K562 (cell line): ENCODE measurements at regions of chr6 and their contacts with region 1.

Region 1: GRCh38 chr6:81752138-81752920 is at the start of gene TENT5A:
- DNase-seq: peak; percentile 81 to 88 (median 84)
- ATAC-seq: peak; percentile 96
- H3K4me3 ChIP-seq: peak within 1 kb of the TSS; percentile 70
- H3K27ac ChIP-seq: peak within 1 kb of the TSS; percentile 81
- H3K4me1 ChIP-seq: peaks cover 3 to 27% of the 10 kb centered on the region in 2 experiments; a peak in 3 of 5 replicates
- H3K27me3 ChIP-seq: peaks cover 0 to 4% of the 10 kb centered on the region in 2 experiments; a peak in 1 of 5 replicates
- CTCF ChIP-seq: no peak
- EP300 ChIP-seq: no peak
- POLR2A ChIP-seq: peak; percentile 72
- RAD21 ChIP-seq: no peak
- polyA plus RNA-seq, gene TENT5A: 1.1 to 1.7 TPM

Region 2: DNA sequence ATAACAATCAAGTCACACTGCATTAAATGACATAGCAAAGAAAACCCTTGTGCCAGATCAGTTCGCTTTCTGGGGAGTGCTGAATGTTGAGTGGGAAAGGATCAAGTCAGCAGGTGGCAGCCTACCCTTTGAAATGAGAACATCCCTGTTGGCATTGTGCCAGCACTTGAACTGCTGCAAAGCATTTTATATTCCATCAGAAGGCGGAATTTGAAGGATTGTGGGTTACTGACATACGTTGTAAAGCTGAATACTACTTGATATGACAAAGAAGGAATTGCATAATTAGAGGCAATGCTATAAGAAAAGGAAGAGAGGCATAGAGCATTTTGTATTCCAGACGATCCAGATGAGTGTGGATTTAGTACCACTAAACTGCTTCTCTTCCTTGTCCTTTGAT is 1619.3 kb before region 1 on chr6:
- CTCF ChIA-PET with region 1: no interaction called
- POLR2A ChIA-PET with region 1: interaction called, 3 read pairs
- in situ Hi-C with region 1: no loop called
- intact Hi-C with region 1: loop called (anchors 2 kb)
- DNase-seq: peak; percentile 27 to 61 (median 46)
- ATAC-seq: peak; percentile 67; the same call in 2 of the 3 replicates
- H3K4me3 ChIP-seq: no peak overlapping the region
- H3K27ac ChIP-seq: no peak overlapping the region
- H3K4me1 ChIP-seq: peaks cover 0 to 4% of the 10 kb centered on the region in 2 experiments; a peak in 1 of 5 replicates
- H3K27me3 ChIP-seq: no peaks in the 10 kb centered on the region
- CTCF ChIP-seq: peak in 2 of 3 experiments; percentile 49 to 57; a peak in 3 of 6 replicates
- EP300 ChIP-seq: no peak
- POLR2A ChIP-seq: no peak
- RAD21 ChIP-seq: peak; percentile 35 to 82; a peak in 3 of 4 replicates

Region 3: GRCh38 chr6:80214436-80215022 is 1537.8 kb before region 1 on chr6:
- CTCF ChIA-PET with region 1: no interaction called
- POLR2A ChIA-PET with region 1: no interaction called
- in situ Hi-C with region 1: no loop called
- intact Hi-C with region 1: loop called (anchors 5 kb)
- DNase-seq: peak; percentile 9 to 65 (median 32)
- ATAC-seq: peak; percentile 98
- H3K4me3 ChIP-seq: no peak overlapping the region
- H3K27ac ChIP-seq: no peak overlapping the region
- H3K4me1 ChIP-seq: no peaks in the 10 kb centered on the region
- H3K27me3 ChIP-seq: no peaks in the 10 kb centered on the region
- CTCF ChIP-seq: peak; percentile 64 to 84 (median 76)
- EP300 ChIP-seq: no peak
- POLR2A ChIP-seq: no peak
- RAD21 ChIP-seq: peak; percentile 66 to 81

Region 4: DNA sequence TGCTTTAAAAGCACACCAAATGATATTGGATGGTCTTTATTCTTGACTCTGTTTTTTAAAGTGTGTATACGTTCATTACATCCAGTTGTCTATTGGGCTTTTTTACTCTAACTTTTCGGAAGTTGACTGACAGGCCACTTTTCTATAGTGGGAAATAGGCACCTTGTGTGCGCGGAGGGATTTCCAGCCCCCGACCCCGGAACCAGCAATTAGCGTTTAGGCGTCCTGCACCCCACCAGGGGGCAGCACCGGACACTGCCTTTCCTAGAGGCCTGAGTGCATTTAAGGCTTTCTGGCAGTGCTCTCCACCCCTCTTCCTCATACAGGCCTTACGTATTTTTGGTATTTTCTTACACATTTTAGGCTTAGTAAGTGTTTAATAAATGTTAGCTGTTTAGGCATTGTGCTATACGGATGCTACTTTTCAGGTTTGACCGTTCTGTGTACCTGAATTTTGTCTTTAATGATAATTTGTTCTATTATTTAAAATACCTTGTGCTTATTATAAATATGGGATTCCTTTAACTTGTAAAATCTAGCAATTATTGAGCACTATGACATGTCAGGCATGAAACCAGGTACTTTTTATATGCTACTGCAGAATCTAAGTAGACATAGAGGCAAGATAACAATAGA is 1414.0 kb before region 1 on chr6:
- CTCF ChIA-PET with region 1: interaction called, 3 read pairs
- POLR2A ChIA-PET with region 1: no interaction called
- in situ Hi-C with region 1: loop called (anchors 10 kb)
- intact Hi-C with region 1: loop called (anchors 2 kb)
- DNase-seq: peak; percentile 57 to 83 (median 68)
- ATAC-seq: peak; percentile 94
- H3K4me3 ChIP-seq: no peak overlapping the region
- H3K27ac ChIP-seq: no peak overlapping the region
- H3K4me1 ChIP-seq: no peaks in the 10 kb centered on the region
- H3K27me3 ChIP-seq: no peaks in the 10 kb centered on the region
- CTCF ChIP-seq: peak; percentile 66 to 84 (median 70)
- EP300 ChIP-seq: no peak
- POLR2A ChIP-seq: no peak
- RAD21 ChIP-seq: peak; percentile 29 to 54; a peak in 3 of 4 replicates

Region 5: DNA sequence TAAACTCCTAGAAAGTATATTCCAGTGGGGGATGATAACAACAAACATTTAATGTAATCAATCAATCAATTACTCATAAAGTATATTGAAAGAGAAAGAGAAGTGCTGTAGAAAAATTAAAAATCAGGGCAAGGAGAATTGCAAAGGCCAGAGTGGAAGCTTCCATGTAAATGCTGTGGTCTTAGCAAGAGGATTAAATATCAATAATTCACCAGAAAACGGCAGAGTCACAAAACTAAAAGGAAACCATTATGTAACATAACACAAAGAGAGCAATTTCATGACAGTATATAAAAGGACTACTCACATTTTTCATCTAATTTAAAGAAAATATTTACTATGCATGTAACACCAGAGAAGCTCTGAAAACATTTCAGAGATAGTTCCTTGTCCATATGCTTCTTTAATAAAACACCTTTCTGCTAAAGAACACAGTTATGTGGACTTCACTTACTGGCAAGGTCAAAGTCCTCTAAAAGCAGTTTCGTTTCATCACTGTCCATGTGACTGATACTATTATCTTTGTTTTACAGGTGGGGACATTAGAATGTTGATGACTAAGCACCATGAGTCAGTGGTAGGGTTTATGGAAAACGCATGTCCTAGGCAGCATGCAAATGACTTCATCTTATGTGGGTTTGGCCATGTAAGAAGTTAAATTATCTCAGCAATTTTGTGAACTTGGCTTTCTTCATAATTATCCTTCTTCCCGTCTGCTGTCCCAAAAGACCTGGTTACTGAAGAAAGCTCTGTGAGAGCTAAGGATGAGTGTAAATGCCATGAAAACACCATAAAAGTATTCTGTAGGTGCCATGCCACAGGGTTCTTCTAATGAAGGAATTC is 185.9 kb after region 1 on chr6:
- CTCF ChIA-PET with region 1: no interaction called
- POLR2A ChIA-PET with region 1: no interaction called
- in situ Hi-C with region 1: no loop called
- intact Hi-C with region 1: loop called (anchors 1 kb)
- DNase-seq: peak; percentile 51 to 84 (median 63)
- ATAC-seq: peak; percentile 96
- H3K4me3 ChIP-seq: no peak overlapping the region
- H3K27ac ChIP-seq: peak overlapping the region; percentile 86
- H3K4me1 ChIP-seq: peaks cover 0 to 24% of the 10 kb centered on the region in 2 experiments; a peak in 3 of 5 replicates
- H3K27me3 ChIP-seq: no peaks in the 10 kb centered on the region
- CTCF ChIP-seq: no peak
- EP300 ChIP-seq: peak; percentile 92
- POLR2A ChIP-seq: peak; percentile 44; the same call in 1 of the 2 replicates
- RAD21 ChIP-seq: no peak; a peak in 1 of 4 replicates

Region 6: DNA sequence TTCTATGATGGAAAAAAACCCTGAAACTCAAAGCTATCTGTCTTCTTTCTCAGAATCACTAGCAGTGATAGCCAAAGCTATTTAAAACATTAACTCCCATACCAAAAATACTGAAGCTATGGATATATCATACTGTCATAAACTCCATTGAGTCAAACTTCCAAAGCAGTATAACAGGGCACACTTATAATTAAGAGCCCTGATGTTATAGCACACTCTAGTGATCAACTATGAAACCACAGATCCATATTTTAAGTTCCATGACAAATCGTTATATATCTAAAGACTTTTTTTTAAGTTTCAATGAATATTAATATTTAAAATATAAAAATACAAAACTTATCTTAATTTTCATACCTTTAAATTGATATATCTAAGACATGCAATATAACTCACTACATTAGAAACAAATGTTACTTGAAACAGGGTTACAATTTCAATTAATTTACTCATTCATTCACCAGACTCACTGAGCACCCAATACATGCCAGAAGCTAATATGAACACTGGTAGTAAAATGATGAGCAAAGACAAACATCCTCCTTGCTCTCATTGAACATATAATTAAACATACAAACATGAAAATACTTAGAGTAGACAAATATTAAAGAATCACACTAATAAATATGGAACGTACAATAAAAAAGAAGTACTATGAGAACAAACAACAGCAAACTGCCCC is 425.9 kb after region 1 on chr6:
- CTCF ChIA-PET with region 1: no interaction called
- POLR2A ChIA-PET with region 1: no interaction called
- in situ Hi-C with region 1: no loop called
- intact Hi-C with region 1: loop called (anchors 10 kb)
- DNase-seq: no peak
- ATAC-seq: peak; percentile 62; the same call in 2 of the 3 replicates
- H3K4me3 ChIP-seq: no peak overlapping the region
- H3K27ac ChIP-seq: no peak overlapping the region
- H3K4me1 ChIP-seq: no peaks in the 10 kb centered on the region
- H3K27me3 ChIP-seq: no peaks in the 10 kb centered on the region
- CTCF ChIP-seq: peak in 2 of 3 experiments; percentile 10 to 51; a peak in 2 of 6 replicates
- EP300 ChIP-seq: no peak
- POLR2A ChIP-seq: no peak
- RAD21 ChIP-seq: peak; percentile 48 to 56